Calu3 (cell line): ENCODE measurements at regions of chr18 and their contacts with region 1.

Region 1: DNA sequence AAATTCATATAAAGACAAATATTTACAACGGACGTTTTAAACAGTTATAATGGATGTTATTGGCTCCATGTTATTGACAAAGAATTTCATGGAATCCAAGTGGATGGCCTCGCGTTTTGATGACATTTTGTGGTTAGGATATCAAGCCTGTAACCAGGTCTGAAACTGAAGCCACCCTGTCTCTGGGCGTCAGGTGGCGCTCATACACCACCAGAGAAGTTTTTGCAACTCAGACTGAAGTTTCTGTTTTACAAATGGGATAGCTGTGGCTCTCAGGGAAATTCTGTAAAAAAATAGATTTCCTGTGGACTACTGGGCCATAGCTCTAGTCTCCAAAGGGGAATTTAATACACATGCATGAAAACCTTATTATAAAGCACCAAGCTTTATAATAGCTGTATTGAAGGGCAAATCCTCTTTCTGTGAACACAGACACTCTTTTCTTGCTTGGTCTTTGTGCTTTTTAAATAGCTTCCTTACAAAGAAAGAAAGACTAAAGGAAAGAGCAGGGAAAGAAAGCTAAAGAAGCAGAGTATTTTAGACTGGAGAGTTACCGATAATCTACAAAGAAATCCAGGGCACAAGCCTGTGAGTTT is 86.7 kb downstream of the C18orf54 start:
- DNase-seq: peak; percentile 72
- H3K4me3 Mint-ChIP-seq: no peak overlapping the region
- H3K27ac Mint-ChIP-seq: no peak overlapping the region
- H3K4me1 Mint-ChIP-seq: no peaks in the 10 kb centered on the region
- H3K27me3 Mint-ChIP-seq: peaks cover 22% of the 10 kb centered on the region
- CTCF ChIP-seq: peak; percentile 70

Region 2: DNA sequence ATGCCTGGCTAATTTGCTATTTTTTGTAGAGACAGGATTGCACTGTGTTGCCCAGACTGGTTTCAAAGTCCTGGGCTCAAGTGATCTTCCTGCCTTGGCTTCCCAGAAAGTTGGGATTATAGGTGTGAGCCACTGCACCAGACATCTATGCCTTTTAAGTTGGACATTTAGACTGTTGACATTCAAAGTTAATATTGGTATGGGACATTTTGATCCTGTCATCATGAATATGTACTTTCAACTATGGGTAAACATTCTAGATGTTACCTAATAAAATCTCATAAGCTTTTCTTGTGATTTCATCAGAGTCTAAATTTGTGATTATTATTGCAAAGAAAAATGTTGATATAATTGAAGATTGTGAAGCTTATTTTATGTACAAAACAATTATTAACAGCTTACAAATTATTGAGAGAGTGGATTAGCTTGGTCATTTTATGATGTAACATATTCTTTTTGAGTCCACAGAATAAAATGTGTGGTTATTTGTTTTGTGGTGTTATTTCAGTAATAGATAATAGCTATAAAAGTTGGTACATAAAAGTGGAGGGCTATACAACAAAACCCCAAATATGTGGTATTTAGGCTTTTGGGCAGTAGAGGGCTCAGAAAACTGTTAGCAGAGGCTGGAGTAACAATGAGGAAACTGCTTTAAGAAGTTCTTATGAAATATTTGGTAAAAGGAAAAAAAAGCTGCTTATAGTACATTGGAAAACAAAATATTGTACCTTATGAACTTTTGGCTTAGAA is 128.2 kb before region 1 on chr18:
- CTCF ChIA-PET with region 1: no interaction called
- intact Hi-C with region 1: no loop called
- DNase-seq: no peak
- H3K4me3 Mint-ChIP-seq: no peak overlapping the region
- H3K27ac Mint-ChIP-seq: no peak overlapping the region
- H3K4me1 Mint-ChIP-seq: no peaks in the 10 kb centered on the region
- H3K27me3 Mint-ChIP-seq: no peaks in the 10 kb centered on the region
- CTCF ChIP-seq: no peak

Region 3: GRCh38 chr18:54392543-54393023 is 51.8 kb before region 1 on chr18:
- CTCF ChIA-PET with region 1: no interaction called
- intact Hi-C with region 1: loop called (anchors 2 kb)
- DNase-seq: peak; percentile 8
- H3K4me3 Mint-ChIP-seq: no peak overlapping the region
- H3K27ac Mint-ChIP-seq: no peak overlapping the region
- H3K4me1 Mint-ChIP-seq: peaks cover 26% of the 10 kb centered on the region
- H3K27me3 Mint-ChIP-seq: no peaks in the 10 kb centered on the region
- CTCF ChIP-seq: peak; percentile 43

Region 4: GRCh38 chr18:54558609-54559585 is 114.5 kb after region 1 on chr18:
- CTCF ChIA-PET with region 1: interaction called, 3 read pairs
- intact Hi-C with region 1: loop called (anchors 2 kb)
- DNase-seq: peak; percentile 34
- H3K4me3 Mint-ChIP-seq: no peak overlapping the region
- H3K27ac Mint-ChIP-seq: no peak overlapping the region
- H3K4me1 Mint-ChIP-seq: no peaks in the 10 kb centered on the region
- H3K27me3 Mint-ChIP-seq: no peaks in the 10 kb centered on the region
- CTCF ChIP-seq: peak; percentile 68

Region 5: DNA sequence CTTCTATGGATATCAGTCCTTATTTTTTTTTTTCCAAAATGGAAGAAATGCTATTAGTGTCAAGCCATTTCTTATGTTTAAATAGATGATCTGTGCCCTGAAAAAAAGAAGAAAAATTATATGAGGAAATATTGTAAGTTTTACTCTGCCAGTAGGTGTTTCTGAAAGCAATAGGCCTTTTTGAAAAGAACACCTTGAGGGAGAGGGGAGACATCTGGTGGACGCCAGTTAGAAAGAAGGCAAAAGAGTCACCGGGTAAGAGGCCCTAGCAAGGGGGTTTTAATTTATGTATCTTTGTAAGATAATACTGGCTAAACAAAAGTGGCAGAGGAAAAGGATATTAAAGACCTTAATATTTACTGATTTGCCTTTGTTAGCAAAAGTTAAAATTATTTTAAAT is 202.8 kb after region 1 on chr18:
- CTCF ChIA-PET with region 1: interaction called, 3 read pairs
- intact Hi-C with region 1: loop called (anchors 1 kb)
- DNase-seq: peak; percentile 48
- H3K4me3 Mint-ChIP-seq: no peak overlapping the region
- H3K27ac Mint-ChIP-seq: peak overlapping the region; percentile 4
- H3K4me1 Mint-ChIP-seq: no peaks in the 10 kb centered on the region
- H3K27me3 Mint-ChIP-seq: no peaks in the 10 kb centered on the region
- CTCF ChIP-seq: peak; percentile 56

Region 6: DNA sequence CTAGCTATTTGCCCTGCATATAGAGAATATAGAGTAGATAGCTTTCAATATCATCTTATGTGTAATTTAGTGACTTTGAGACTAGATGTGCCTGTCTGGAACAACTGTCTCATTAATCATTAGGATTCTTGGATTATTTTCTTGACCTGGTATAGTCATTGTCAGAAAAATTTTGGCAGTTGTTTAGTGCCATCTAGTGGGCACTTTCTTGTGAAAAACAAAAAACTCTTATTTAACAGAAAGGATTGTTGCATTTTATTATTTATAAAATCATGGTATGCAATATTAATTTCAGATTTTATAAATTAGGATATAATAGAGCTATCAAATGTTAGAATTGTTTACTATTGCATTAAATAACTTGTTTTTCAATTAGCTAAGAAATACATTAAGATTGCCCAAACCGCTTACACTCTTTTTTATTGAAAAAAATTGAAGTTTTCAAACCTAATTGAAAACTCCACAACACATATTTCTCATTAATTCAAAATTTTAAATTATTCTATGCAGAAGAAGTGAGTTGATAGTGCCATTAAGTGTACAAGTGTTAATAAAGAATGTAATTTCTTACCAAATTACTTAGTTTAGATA is 227.0 kb after region 1 on chr18:
- CTCF ChIA-PET with region 1: interaction called, 3 read pairs
- intact Hi-C with region 1: loop called (anchors 1 kb)
- DNase-seq: peak; percentile 26
- H3K4me3 Mint-ChIP-seq: no peak overlapping the region
- H3K27ac Mint-ChIP-seq: no peak overlapping the region
- H3K4me1 Mint-ChIP-seq: peaks cover 11% of the 10 kb centered on the region
- H3K27me3 Mint-ChIP-seq: no peaks in the 10 kb centered on the region
- CTCF ChIP-seq: peak; percentile 55

Region 7: GRCh38 chr18:54958657-54959625 is 514.5 kb after region 1 on chr18 and contains the start of gene CCDC68:
- CTCF ChIA-PET with region 1: no interaction called
- intact Hi-C with region 1: loop called (anchors 10 kb)
- DNase-seq: peak; percentile 89
- H3K4me3 Mint-ChIP-seq: peak within 1 kb of the TSS; percentile 82
- H3K27ac Mint-ChIP-seq: peak within 1 kb of the TSS; percentile 28
- H3K4me1 Mint-ChIP-seq: peaks cover 35% of the 10 kb centered on the region
- H3K27me3 Mint-ChIP-seq: no peaks in the 10 kb centered on the region
- CTCF ChIP-seq: no peak
- total RNA-seq, gene CCDC68: 16.0 and 25.5 TPM in 2 replicates

Region 8: GRCh38 chr18:54983041-54983686 is 538.7 kb after region 1 on chr18:
- CTCF ChIA-PET with region 1: no interaction called
- intact Hi-C with region 1: loop called (anchors 10 kb)
- DNase-seq: peak; percentile 20
- H3K4me3 Mint-ChIP-seq: no peak overlapping the region
- H3K27ac Mint-ChIP-seq: no peak overlapping the region
- H3K4me1 Mint-ChIP-seq: peaks cover 6% of the 10 kb centered on the region
- H3K27me3 Mint-ChIP-seq: no peaks in the 10 kb centered on the region
- CTCF ChIP-seq: peak; percentile 70